ENCODE measurements at regions of chr4 and their contacts with region 1.

Region 1: GRCh38 chr4:67122029-67122428 is 423.3 kb downstream of the CENPC start:
- DNase-seq: no peak
- H3K4me3 ChIP-seq: no peak overlapping the region
- H3K27ac ChIP-seq: no peak overlapping the region
- H3K4me1 ChIP-seq: no peaks in the 10 kb centered on the region
- H3K27me3 ChIP-seq: no peaks in the 10 kb centered on the region
- CTCF ChIP-seq: no peak
- EP300 ChIP-seq: no peak
- POLR2A ChIP-seq: no peak

Region 2: DNA sequence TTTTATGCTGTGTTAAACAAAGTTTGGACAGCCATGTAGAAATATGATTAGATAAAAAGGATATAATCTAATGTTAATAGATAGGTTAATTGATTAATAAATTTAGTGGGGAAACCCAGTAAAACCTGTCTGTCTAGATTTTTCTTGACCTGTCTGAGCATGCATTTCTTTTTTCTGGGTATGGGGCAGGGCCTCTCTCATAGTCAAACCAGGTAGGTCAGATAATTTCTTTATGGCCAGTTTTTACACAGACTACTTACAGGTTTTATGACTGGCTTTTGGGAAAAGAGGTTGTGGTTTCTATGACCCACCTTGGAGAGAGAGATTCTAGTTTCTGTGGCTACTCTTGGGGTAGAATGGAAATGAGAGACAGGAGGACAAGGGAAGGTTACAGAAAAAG is 1316.1 kb before region 1 on chr4:
- in situ Hi-C with region 1: no loop called
- intact Hi-C with region 1: loop called (anchors 5 kb)
- DNase-seq: no peak
- H3K4me3 ChIP-seq: no peak overlapping the region
- H3K27ac ChIP-seq: no peak overlapping the region
- H3K4me1 ChIP-seq: no peaks in the 10 kb centered on the region
- H3K27me3 ChIP-seq: no peaks in the 10 kb centered on the region
- CTCF ChIP-seq: no peak
- EP300 ChIP-seq: no peak
- POLR2A ChIP-seq: no peak